ENCODE measurements at regions of chr4 and their contacts with region 1.

Region 1: GRCh38 chr4:80266253-80266901 is at the start of gene FGF5:
- DNase-seq: peak; percentile 71

Region 2: GRCh38 chr4:80213117-80213815 is 53.1 kb before region 1 on chr4:
- CTCF ChIA-PET with region 1: no interaction called
- POLR2A ChIA-PET with region 1: no interaction called
- DNase-seq: no peak

Region 3: DNA sequence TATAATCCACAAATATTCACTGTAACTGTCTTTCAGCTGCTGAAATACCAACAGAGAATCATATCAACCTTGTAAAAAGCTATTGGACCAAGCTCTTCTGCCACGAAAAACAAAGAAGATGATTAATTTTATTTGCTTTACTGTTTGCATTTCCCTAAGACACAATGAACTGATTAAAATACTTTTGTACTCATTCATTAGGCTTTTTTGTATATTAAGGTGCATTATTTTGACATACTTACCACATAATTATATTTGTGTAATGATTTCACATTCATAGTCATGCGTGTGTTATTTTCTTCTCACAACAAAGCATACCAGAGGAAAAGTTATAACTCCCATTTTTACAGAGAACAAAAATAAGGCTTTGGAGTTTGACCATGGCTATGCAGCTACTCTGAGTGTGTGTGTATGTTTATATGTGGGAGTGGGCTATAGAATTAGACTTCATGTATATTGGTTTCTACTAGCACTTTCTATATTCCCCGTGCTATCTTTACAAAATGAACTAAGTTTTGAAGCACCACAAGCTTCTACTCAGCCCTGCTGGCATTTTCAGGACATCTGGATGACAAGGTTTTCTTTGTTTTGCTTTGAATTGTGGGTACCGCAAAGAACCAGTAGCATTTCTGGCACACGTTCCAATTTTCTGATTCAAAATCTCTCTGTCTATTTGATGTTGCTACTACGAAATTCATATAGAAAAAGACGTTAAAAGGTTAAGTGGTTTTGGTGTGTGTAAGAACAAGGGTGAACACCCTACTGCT is 10.9 kb before region 1 on chr4:
- CTCF ChIA-PET with region 1: interaction called, 3 read pairs
- POLR2A ChIA-PET with region 1: interaction called, 14 read pairs
- DNase-seq: no peak

Region 4: DNA sequence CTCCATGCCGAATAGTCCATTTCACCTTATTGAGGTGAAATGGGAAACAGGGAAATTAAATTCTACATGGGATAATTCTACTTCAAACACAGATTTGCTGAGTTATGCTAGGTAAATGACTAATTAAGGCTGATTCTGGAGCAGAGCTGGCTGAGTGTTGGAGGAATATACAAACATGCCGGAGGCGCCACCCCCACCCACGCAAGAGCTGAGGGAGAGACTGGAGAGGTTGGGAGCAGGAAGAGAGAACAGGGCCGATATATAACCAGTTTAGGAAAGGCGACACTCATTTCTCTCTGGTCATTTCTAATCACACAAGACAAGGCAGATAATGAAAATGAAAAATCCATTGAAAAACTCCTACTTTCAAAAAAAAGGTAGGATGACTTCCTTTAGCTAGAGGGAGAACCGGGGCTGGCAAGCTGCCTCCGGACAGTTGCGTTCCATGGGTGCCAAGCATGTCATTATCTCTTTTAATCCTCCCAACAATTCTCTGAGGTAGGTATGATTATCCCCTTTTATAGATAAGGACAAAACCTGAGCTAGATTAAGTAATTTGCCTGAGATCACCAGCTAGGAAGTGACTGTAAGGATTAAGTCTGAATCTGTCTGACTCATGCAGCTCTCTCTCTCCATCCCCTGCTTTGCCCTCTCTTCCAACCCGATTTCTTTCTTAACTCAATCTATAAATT is 41.5 kb after region 1 on chr4:
- CTCF ChIA-PET with region 1: no interaction called
- POLR2A ChIA-PET with region 1: interaction called, 15 read pairs
- DNase-seq: peak; percentile 37